Left cardiac atrium (tissue), 4 donors: ENCODE measurements at regions of chr9 and their contacts with region 1.

Region 1: GRCh38 chr9:70574151-70574837 is 159.8 kb upstream of the KLF9 start:
- DNase-seq: peak; percentile 52
- ATAC-seq: peak; percentile 75 to 89

Region 2: DNA sequence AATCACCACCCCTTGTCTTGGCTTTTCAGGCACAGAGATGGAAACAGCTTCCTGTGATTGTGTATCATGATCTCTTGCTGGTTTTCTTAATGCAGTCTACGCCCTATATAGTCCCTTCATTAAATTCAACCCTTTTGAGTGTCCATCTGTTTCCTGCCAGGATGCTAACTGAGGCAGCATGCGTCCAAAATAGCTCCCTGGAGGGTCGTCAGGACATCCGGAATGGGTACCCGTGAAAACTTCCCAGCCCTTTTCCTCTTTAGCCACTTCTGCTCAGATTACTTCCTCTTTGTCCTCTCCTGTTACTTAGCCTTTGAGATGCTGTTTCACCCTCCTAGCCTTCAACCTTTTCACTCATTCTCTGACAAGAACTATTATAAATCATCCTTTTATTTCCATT is 80.1 kb before region 1 on chr9:
- intact Hi-C with region 1: loop called (anchors 5 to 10 kb)
- DNase-seq: no peak
- ATAC-seq: peak; percentile 31 to 33

Region 3: DNA sequence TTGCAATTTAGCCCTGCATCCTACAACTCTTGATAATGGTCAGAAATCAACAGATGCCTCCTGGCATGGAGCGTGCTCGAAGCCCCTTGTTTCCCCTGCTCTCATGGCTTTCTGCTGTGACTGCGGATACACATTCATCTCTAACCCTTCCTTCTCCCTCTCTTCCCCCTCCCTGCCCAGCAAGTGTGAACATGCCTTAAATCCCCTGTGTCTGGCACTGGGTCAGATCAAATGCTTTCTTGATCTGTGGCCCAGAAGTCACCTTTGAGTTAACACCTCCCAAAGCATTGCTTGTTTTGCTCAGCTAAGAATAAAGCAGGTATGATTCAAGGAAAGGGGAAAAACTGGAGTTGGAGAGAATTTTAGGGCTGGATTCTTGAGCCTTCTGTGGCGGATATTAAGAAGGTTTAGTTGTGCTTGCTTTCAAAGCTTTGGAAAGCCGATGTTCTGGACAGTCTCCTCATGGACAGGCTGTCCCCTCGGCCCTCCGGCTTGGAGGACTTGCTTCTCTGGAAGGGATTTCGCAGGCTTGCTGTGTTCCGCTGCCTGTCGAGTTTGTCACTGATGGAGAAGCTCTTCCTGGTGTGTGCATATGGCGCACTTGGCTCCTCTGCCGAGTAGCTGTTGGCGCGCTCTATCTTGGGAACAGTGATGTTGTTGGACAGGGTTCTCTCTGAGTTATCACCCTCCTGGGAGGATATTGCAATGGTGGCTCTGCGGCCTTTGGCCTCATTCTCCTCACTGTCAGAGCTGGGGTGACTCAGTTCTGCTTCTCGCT is 38.6 kb before region 1 on chr9:
- intact Hi-C with region 1: loop called in 1 of 2 experiments (anchors 5 kb)
- DNase-seq: no peak
- ATAC-seq: no peak

Region 4: DNA sequence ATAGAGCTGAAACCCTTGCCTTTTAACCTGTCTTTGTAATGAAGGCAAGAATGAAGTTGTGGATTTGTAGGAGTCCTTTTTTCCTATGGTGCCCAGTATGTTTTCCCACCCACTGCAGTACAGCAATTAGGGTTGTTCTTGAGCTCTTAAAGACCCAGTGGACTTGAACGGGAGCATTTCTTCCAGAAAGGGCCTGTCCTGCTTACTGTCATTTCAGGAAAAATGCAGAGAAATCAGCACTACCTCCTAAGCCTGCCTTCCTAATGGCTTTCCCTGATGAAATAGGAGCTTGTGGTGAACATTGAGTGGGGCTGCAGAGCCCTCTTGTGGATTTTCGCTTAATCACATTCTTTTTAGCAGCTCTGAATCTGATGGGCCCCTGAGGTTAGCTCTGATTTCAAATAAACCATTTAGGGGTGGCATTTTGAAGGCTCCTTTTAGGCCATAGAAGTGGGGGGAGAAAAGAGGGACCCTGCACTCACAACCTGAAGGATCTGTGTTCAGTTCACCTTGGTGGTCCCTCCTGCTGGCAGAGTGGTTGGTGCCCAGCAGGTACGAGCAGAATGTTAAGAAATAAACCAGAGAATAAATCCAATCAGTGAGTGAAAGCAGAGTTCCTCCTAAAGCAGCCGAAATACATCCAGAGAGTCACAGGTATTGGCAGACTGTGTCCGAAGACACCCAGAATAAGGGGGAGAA is 28.2 kb after region 1 on chr9:
- intact Hi-C with region 1: no loop called
- DNase-seq: peak; percentile 38
- ATAC-seq: peak; percentile 61 to 62